Left ventricle myocardium superior (tissue), 1 donor: ENCODE measurements at regions of chr7 and their contacts with region 1.

Region 1: GRCh38 chr7:12524794-12525386 is 45.6 kb upstream of the SCIN start:
- DNase-seq: no peak
- ATAC-seq: no peak

Region 2: DNA sequence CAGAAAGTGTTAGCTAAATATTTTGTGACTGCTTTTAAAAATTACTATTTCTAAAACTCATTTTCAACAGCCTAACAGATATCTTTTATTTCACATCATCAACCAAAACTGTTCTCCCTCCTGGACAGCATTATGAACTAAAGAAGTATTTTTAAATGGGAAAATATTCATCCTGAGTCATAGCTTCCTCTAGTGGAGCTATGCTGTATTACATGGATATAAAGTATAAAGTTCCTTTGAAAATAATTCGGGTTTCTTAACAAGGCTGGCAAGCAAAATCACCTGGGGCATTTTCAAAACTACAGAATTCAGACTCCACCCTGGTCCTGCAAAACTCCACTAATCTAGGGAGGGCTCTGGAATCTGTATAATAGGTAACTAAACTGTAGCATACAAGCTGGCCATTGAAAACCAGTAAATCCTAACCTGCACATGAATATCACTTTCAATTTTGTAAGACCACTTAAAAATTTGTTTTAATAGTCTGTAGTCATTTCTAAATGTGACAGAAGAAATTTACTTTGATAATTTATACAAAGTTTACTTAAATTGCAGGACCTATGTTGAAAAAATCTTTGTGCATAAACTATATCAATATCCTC is 99.1 kb after region 1 on chr7:
- intact Hi-C with region 1: loop called (anchors 5 kb)
- DNase-seq: no peak
- ATAC-seq: no peak